Right ventricle myocardium inferior (tissue), 1 donor: ENCODE measurements at regions of chr6 and their contacts with region 1.

Region 1: DNA sequence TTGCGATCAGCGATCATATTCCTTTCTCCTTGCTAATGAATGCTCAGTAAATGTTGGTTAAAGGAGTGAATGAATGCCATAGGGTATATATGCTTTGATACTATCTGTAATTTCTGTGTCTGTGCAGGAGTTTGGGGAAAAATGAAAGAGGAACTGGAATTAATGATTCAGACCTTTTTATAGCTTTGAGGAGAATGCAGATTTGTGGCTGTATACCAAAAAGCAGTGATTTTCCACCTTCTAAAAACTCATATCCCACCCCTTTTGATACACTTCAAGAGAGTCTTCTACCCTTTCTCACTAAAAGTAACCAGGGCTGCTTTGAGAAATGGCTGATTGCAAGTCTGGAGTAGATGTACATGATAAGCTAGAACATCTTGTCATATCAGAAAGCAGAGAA is 26.6 kb upstream of the SUMO4 start:
- DNase-seq: no peak
- ATAC-seq: no peak

Region 2: DNA sequence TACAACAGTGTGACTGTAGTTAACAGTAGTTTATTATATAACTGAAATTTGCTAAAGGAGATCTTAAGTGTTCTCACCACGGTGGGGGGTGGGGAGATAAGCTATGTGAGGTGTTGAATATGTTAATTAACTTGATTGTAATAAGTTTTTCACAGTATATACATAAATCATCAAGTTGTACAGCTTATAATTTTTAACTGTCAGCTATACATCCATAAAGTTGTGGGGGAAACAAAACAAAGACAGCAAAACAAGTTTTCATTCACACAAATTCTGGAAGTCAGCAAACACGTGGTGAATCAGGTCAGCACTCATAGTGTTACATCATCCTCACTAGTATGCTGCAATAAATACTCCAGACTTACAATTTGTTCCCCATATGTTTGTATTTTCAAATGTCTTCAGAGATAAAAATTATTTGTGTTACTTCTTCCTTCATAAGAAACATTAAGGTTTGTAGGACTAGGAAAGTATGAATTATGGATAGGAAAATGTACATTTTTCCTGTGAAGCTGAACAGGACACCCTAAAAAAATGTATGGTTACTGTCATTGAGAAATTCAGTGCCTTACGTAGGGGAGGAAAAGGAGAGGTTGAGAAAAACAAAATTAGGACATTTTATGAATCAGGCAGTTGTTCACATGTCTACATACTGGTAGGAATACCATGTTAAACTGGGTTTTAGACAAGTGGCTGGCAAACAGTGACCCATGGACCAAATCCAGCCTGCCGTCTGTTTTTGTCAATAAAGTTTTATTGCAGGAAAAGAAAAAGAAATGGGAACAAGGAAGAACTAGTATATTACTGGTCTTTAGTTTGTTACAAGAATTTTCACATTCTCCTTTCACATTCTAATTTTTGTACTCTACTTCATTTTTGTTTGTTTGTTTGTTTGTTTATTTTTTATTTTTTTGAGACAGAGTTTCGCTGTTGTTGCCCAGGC is 32.6 kb after region 1 on chr6:
- intact Hi-C with region 1: loop called (anchors 5 kb)
- DNase-seq: no peak
- ATAC-seq: no peak